CD8-positive, alpha-beta T cell (primary cell): ENCODE measurements at regions of chr9 and their contacts with region 1.

Region 1: GRCh38 chr9:19533373-19533772 is 124.6 kb downstream of the ACER2 start:
- DNase-seq: no peak
- ATAC-seq: no peak
- H3K4me3 ChIP-seq: no peak overlapping the region
- H3K4me3 Mint-ChIP-seq: no peak overlapping the region
- H3K27ac ChIP-seq: no peak overlapping the region
- H3K27ac Mint-ChIP-seq: no peak overlapping the region
- H3K4me1 ChIP-seq: no peaks in the 10 kb centered on the region
- H3K4me1 Mint-ChIP-seq: no peaks in the 10 kb centered on the region
- H3K27me3 ChIP-seq: no peaks in the 10 kb centered on the region
- H3K27me3 Mint-ChIP-seq: peaks cover 12% of the 10 kb centered on the region
- CTCF ChIP-seq: no peak

Region 2: GRCh38 chr9:19493174-19493811 is 40.1 kb before region 1 on chr9:
- CTCF ChIA-PET with region 1: no interaction called
- POLR2A ChIA-PET with region 1: no interaction called
- intact Hi-C with region 1: no loop called
- DNase-seq: peak in 6 of 9 experiments; percentile 10 to 60 (median 42)
- ATAC-seq: peak; percentile 63
- H3K4me3 ChIP-seq: no peak overlapping the region
- H3K4me3 Mint-ChIP-seq: peak overlapping the region; percentile 40
- H3K27ac ChIP-seq: no peak overlapping the region
- H3K27ac Mint-ChIP-seq: no peak overlapping the region
- H3K4me1 ChIP-seq: no peaks in the 10 kb centered on the region
- H3K4me1 Mint-ChIP-seq: peaks cover 9% of the 10 kb centered on the region
- H3K27me3 ChIP-seq: no peaks in the 10 kb centered on the region
- H3K27me3 Mint-ChIP-seq: peaks cover 15% of the 10 kb centered on the region
- CTCF ChIP-seq: peak; percentile 76

Region 3: DNA sequence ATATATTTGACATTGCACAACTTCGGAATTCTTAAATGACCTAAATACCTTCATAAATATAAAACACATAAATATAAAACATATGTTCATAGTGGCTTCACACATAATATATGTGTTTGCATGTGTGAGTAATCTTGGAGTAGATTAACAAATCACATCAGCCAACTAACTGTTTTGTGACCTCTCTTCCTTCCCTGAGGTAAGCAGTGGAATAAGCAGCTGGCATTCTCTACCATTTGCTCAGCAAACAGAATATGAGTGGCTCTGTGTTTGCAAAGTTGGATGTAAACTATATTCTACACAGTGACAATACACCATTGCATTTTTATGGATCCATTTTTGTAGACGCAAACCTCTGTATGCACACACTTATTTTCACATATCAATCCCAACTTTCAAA is 65.3 kb after region 1 on chr9:
- CTCF ChIA-PET with region 1: no interaction called
- POLR2A ChIA-PET with region 1: no interaction called
- intact Hi-C with region 1: loop called in 1 of 2 experiments (anchors 10 kb)
- DNase-seq: no peak
- ATAC-seq: no peak
- H3K4me3 ChIP-seq: no peak overlapping the region
- H3K4me3 Mint-ChIP-seq: no peak overlapping the region
- H3K27ac ChIP-seq: no peak overlapping the region
- H3K27ac Mint-ChIP-seq: no peak overlapping the region
- H3K4me1 ChIP-seq: no peaks in the 10 kb centered on the region
- H3K4me1 Mint-ChIP-seq: no peaks in the 10 kb centered on the region
- H3K27me3 ChIP-seq: no peaks in the 10 kb centered on the region
- H3K27me3 Mint-ChIP-seq: peaks cover 17% of the 10 kb centered on the region
- CTCF ChIP-seq: no peak